ENCODE measurements at regions of chr1 and their contacts with region 1.

Region 1: GRCh38 chr1:76154206-76154956 is 79.8 kb downstream of the ST6GALNAC3 start:
- DNase-seq: peak; percentile 70
- H3K4me3 Mint-ChIP-seq: peak overlapping the region; percentile 79
- H3K27ac Mint-ChIP-seq: peak overlapping the region; percentile 91
- H3K4me1 Mint-ChIP-seq: peaks cover 11% of the 10 kb centered on the region
- H3K27me3 Mint-ChIP-seq: peaks cover 7% of the 10 kb centered on the region

Region 2: DNA sequence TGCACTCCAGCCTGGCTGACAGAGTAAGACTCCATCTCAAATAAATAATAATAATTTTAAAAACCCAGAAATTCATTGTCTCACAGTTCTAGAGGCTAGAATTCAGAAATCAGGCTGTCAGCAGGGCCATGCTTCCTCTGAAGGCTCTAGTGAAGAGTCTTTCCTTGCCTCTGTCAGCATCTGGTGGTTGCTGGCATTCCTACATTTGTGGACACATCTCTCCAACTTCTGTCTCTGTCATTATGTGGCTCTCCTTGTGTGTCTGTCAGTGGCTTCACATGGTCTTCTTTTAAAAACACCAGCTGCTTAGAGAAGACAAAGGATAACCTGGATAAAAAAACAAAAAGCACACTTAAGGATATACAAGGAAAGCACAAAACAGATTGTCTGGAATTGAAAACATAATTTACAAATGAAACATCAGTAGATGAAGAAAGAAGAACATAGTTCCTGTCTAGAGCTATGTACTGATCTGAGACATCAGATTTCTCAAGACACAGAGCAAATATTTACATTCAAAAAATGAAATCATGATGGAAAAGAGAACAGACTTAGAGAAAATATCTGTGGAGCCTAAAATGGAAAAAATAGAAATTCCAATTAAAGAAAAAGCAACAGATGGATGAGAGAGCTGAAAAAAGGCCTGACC is 189.5 kb before region 1 on chr1:
- intact Hi-C with region 1: no loop called
- DNase-seq: no peak
- H3K4me3 Mint-ChIP-seq: no peak overlapping the region
- H3K27ac Mint-ChIP-seq: no peak overlapping the region
- H3K4me1 Mint-ChIP-seq: no peaks in the 10 kb centered on the region
- H3K27me3 Mint-ChIP-seq: no peaks in the 10 kb centered on the region

Region 3: DNA sequence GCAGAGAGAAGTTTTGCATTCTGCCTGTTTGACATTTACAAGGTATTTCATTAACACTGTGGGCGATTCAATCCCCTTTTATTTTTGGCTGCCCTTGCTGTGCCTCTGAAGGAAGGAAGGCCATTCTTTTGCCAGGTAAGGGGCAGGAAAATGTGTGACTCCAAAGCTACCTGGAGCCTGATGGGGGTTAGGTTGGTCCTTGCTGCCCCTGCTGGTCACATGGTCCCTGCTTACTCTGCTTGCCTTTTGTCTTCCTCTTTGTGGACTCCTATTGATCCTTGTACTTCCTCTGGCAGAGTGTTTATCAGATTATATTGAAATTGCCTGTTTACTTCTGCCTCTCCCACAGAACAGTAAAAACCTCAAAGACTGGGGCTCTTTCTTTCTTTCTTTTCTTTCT is 14.2 kb before region 1 on chr1:
- intact Hi-C with region 1: no loop called
- DNase-seq: no peak
- H3K4me3 Mint-ChIP-seq: no peak overlapping the region
- H3K27ac Mint-ChIP-seq: no peak overlapping the region
- H3K4me1 Mint-ChIP-seq: no peaks in the 10 kb centered on the region
- H3K27me3 Mint-ChIP-seq: no peaks in the 10 kb centered on the region

Region 4: DNA sequence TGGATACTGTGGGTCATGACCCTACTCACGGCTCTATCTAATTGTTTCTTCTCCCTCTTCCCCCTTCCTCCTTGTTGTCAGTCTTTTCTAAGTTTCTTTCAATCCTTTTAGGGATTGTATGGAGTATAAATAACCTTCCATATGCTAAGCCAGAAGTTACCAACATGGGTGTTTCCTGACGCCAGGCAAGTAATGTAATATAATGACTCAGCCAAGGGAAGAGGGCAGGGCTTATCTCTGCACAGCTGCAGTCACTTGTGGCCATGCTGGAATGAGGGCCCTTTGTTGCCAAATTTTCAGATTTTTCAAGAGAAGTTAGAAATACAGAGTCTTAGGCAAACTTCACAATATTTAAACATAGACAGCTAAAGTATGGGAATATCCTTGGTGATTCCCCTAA is 114.8 kb after region 1 on chr1:
- intact Hi-C with region 1: loop called (anchors 5 kb)
- DNase-seq: no peak
- H3K4me3 Mint-ChIP-seq: peak overlapping the region; percentile 53
- H3K27ac Mint-ChIP-seq: no peak overlapping the region
- H3K4me1 Mint-ChIP-seq: peaks cover 55% of the 10 kb centered on the region
- H3K27me3 Mint-ChIP-seq: peaks cover 8% of the 10 kb centered on the region

Region 5: GRCh38 chr1:76330991-76331603 is 176.7 kb after region 1 on chr1:
- intact Hi-C with region 1: loop called (anchors 1 kb)
- DNase-seq: peak; percentile 19
- H3K4me3 Mint-ChIP-seq: no peak overlapping the region
- H3K27ac Mint-ChIP-seq: no peak overlapping the region
- H3K4me1 Mint-ChIP-seq: peaks cover 4% of the 10 kb centered on the region
- H3K27me3 Mint-ChIP-seq: peaks cover 4% of the 10 kb centered on the region

Region 6: DNA sequence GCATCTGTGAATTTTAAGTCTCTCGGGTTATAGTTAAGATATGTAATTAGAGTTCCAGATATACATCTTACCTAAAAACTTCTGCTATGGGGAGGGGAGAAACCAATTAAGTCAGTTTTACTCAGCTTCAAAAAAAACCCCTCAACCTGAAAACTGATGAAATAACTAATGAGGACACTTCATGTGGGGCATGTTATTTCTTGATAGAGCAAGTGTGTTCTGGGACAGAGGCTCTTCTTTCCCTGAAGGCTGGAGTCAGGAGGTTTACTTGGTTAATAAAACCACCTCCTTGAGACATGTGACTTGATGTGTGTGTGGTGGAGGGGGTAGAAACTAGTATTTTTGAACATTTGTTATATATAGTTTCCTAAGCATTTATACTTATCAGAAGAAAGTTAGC is 399.9 kb after region 1 on chr1:
- intact Hi-C with region 1: loop called (anchors 10 kb)
- DNase-seq: no peak
- H3K4me3 Mint-ChIP-seq: no peak overlapping the region
- H3K27ac Mint-ChIP-seq: no peak overlapping the region
- H3K4me1 Mint-ChIP-seq: no peaks in the 10 kb centered on the region
- H3K27me3 Mint-ChIP-seq: no peaks in the 10 kb centered on the region

Region 7: DNA sequence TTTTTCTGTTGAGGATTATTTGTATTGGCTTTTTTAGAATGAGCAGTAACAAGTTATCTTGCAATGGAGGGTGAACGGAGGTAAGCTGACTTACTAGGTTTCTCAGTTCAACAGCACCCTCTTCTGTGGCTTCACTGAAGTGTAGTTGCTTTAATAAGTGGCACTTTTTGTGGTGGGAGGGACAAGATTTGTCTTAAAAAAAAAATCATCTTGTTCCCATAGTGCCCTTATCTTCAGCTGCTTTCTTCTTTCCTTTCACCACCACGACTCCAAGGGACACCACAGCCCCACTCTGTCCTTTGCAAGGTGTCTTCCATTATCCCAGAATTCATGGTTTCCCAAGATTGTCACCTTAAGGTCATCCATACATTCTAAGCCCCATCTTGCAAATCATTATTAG is 971.9 kb after region 1 on chr1:
- intact Hi-C with region 1: loop called (anchors 5 kb)
- DNase-seq: no peak
- H3K4me3 Mint-ChIP-seq: no peak overlapping the region
- H3K27ac Mint-ChIP-seq: no peak overlapping the region
- H3K4me1 Mint-ChIP-seq: no peaks in the 10 kb centered on the region
- H3K27me3 Mint-ChIP-seq: no peaks in the 10 kb centered on the region